ENCODE measurements at regions of chr11 and their contacts with region 1.

Region 1: DNA sequence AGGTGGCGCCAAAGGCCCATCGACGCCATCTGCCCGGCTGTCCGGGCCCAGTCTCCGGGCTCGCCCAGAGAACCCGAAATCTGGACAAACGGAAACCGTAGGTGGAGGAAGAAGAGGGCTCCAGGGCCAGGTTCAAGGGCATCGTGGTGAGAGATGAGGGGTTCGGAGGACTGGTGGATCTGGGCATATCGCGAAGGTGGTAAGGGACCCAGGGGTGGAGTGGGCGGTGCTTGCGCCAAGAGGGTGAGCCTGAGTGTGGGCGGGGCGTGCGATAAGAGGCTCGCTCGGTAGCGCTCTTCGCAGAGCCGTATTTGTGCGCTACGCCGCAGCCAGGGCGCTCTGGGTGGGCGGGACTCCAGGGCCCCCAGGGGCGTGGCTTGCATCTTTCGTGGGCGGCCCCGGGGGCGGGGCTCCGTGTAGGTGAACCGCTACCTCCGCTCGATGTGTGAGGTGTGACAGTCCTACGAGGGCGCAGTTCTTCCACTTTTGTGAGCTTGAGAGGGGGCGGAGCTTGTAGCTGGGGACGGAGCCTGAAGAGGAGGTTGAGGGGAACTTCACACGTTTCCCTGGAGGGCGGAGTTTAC is 4.8 kb downstream of the CD248 start:
- DNase-seq: peak; percentile 93 to 98
- ATAC-seq: peak; percentile 83 to 89
- H3K4me3 ChIP-seq: peak overlapping the region; percentile 42
- H3K27ac ChIP-seq: peak overlapping the region; percentile 76 to 88
- H3K4me1 ChIP-seq: peaks cover 13% of the 10 kb centered on the region
- CTCF ChIP-seq: peak; percentile 98
- EP300 ChIP-seq: no peak
- POLR2A ChIP-seq: no peak
- RAD21 ChIP-seq: peak; percentile 96 to 99

Region 2: DNA sequence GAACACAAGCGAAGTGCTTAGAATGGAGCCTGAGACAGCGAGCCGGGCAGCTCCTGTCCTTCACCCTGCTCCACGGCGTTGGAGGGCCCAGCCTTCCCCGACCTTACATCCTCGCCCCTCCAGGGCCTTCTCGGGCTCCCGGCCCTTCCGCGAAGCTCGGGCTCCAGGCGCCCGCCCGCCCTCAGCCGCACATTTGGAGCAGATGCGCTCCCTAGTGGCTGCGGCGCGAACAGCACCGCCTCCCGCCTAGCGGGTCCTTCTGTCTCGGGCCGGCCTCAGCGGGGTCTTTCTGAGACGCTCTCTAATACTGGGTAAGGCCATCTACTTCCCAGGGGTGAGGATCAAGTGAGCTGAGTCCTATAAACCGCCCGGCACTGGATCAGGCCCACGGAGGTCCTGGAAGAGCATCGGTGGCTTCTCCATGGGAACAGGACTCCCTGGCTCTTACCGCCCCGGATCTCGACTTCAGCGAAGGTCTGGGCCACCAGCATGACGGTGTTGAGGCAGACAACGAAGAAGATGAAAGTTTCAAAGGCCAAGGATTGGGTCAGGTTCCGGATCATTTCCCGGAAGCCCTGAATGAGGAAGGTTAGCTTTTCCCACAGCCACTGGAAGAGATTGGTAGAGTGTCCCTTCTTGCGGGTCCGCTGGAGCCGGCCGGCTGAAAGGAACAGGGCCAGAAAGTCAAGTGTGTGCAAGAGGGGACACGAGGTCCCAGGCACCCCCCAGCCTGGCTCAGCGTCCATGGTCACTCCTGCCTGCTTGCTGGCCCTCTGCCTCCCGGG is 289.5 kb before region 1 on chr11:
- CTCF ChIA-PET with region 1: no interaction called
- POLR2A ChIA-PET with region 1: no interaction called
- DNase-seq: peak; percentile 72 to 82
- ATAC-seq: peak; percentile 78 to 92
- H3K4me3 ChIP-seq: peak overlapping the region; percentile 33
- H3K27ac ChIP-seq: peak overlapping the region; percentile 50 to 77
- H3K4me1 ChIP-seq: peaks cover 12% of the 10 kb centered on the region
- CTCF ChIP-seq: peak; percentile 84
- EP300 ChIP-seq: no peak
- POLR2A ChIP-seq: no peak
- RAD21 ChIP-seq: peak; percentile 72 to 75

Region 3: DNA sequence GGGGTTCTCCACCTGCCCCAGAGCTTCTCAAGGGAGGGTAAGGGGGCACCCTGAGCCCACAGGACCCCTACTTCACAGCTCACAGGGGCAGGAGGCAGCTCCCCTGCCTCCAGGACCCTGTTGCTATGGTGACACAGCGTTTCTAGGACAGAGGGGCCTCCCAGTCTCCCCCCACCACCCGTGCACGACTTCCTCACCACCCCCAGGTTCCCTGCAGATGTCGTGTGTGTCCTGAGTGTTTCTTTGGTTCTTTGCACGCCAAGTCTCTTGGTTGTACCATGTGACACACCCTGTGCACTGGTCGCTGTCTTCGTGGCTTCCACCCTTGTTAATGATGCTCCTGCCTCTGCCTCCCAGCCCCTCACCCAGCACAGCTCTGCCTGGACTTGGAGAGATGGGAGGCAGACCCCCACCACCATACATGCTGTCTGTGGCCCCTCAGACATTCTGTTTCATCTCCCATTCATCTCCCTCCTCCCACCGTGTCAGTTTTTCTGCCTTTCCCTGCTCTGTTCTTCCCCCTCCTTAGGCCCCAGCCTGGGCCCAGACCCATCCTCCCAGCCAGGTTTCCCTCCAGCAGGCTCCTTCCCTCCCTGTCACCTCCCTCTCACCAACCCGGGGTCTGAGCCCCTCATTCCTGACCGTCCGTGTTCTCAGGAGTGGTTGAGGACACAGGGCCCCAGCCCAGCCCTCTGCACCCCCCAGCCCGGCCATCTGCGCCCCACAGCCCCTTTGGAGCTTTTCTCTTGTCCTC is 68.1 kb before region 1 on chr11:
- CTCF ChIA-PET with region 1: no interaction called
- POLR2A ChIA-PET with region 1: no interaction called
- DNase-seq: no peak
- ATAC-seq: no peak
- H3K4me3 ChIP-seq: no peak overlapping the region
- H3K27ac ChIP-seq: no peak overlapping the region
- H3K4me1 ChIP-seq: no peaks in the 10 kb centered on the region
- CTCF ChIP-seq: no peak
- EP300 ChIP-seq: no peak
- POLR2A ChIP-seq: no peak
- RAD21 ChIP-seq: no peak

Region 4: DNA sequence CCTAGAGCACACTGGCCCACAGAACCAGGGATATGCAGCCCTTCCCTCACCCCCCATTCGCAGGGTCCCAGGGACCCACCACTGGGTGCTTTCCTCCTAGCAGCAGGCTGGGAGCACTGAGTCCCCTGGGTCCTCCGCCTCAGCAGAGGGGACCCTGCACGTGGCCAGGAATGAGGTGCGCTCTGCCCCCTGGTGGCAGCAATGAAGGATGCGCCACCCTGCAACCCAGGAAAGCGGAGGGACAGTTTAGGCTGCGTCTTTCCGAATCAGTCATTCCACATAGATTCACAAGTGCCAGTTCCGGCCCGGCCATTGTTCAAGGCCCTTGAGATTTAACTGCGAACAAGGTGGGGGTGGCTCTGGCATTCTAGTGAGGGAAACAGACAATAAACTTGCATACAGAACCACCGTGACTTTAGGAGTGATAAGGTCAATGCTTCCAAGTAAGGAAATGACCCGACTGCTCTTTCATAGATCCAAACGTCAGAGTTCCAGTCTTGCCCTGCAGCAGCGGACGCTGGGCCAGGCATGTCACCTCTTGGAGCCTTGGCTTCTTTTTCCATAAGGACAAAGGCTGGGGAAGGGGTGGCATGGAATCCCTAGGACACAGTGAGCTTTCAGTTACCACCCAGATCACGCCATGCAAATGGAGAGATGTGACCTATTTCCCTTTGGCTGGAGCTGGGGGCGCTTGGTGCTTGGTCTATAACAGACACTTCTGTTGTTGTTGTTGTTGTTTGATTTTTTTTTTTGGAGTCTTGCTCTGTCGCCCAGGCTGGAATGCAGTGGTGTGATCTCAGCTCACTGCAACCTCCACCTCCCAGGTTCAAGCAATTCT is 16.5 kb after region 1 on chr11:
- CTCF ChIA-PET with region 1: interaction called, 247 read pairs
- POLR2A ChIA-PET with region 1: interaction called, 42 read pairs
- DNase-seq: peak; percentile 78 to 83
- ATAC-seq: peak; percentile 71 to 87
- H3K4me3 ChIP-seq: no peak overlapping the region
- H3K27ac ChIP-seq: peak overlapping the region; percentile 48 to 88; a peak in 5 of 6 replicates
- H3K4me1 ChIP-seq: peaks cover 37% of the 10 kb centered on the region
- CTCF ChIP-seq: peak; percentile 93
- EP300 ChIP-seq: no peak
- POLR2A ChIP-seq: no peak
- RAD21 ChIP-seq: peak; percentile 83 to 86

Region 5: GRCh38 chr11:66344550-66345315 is 32.7 kb after region 1 on chr11 and contains the start of gene BRMS1:
- CTCF ChIA-PET with region 1: interaction called, 57 read pairs
- POLR2A ChIA-PET with region 1: interaction called, 12 read pairs
- DNase-seq: peak; percentile 94 to 98
- ATAC-seq: peak; percentile 66 to 85
- H3K4me3 ChIP-seq: peak within 1 kb of the TSS; percentile 88
- H3K27ac ChIP-seq: peak within 1 kb of the TSS; percentile 77 to 93
- H3K4me1 ChIP-seq: peaks cover 32% of the 10 kb centered on the region
- CTCF ChIP-seq: no peak
- EP300 ChIP-seq: no peak
- POLR2A ChIP-seq: peak; percentile 97
- RAD21 ChIP-seq: no peak
- polyA plus RNA-seq, gene BRMS1: 47.4 and 56.2 TPM in 2 replicates

Region 6: DNA sequence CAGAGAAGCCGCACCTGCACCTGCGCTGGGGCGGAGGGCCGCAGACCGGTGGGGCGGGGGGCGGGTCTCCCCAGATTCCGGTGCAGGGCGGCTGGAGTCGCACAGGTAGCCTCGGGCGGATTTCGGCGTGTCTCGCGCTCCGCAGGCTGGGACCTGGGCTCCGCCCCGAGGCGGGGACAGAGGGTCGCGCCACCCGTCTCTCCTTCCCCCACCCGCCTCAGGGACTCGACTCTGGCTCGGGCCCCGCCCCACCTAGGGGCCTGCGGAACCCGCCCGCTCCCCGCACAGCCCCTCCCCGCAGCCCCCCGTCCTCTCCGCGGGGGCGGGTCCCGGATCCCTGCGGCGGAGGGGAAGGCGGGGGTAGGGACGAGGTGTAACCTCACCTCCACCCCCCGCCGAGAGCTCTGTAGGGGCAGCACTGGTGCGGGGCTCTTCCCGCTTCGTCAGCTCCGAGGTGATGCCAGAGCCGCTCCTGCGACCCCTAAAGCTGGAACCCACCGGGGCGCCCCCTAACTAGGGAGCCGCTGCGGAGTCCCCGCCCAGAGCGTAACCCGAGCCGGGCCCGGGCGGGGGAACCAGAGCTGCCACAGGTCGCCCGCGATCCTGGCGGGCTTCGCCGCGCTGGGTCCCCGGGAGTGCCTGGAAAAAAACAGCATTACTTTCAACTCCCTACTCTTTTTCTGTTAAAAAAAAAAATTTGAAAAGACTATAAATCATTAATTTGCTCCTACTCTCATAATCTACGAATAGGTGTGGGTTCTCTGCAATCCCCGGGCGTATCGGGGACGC is 59.8 kb after region 1 on chr11 and contains the start of gene SLC29A2:
- CTCF ChIA-PET with region 1: interaction called, 19 read pairs
- POLR2A ChIA-PET with region 1: no interaction called
- DNase-seq: peak; percentile 40 to 68
- ATAC-seq: peak; percentile 74 to 83
- H3K4me3 ChIP-seq: peak within 1 kb of the TSS; percentile 98
- H3K27ac ChIP-seq: peak within 1 kb of the TSS; percentile 84 to 85
- H3K4me1 ChIP-seq: peaks cover 17% of the 10 kb centered on the region; the same call in 1 of the 3 replicates
- CTCF ChIP-seq: no peak
- EP300 ChIP-seq: no peak
- POLR2A ChIP-seq: no peak
- RAD21 ChIP-seq: no peak
- polyA plus RNA-seq, gene SLC29A2: 2.6 and 3.9 TPM in 2 replicates